CD8-positive, alpha-beta T cell (primary cell): ENCODE measurements at regions of chr5 and their contacts with region 1.

Region 1: GRCh38 chr5:142881076-142881783 is 111.1 kb downstream of the ARHGAP26 start:
- DNase-seq: peak in 1 of 9 experiments; percentile 39
- ATAC-seq: no peak
- H3K4me3 ChIP-seq: no peak overlapping the region
- H3K4me3 Mint-ChIP-seq: no peak overlapping the region
- H3K27ac ChIP-seq: no peak overlapping the region
- H3K27ac Mint-ChIP-seq: no peak overlapping the region
- H3K4me1 ChIP-seq: no peaks in the 10 kb centered on the region
- H3K4me1 Mint-ChIP-seq: peaks cover 6% of the 10 kb centered on the region
- H3K27me3 ChIP-seq: no peaks in the 10 kb centered on the region
- H3K27me3 Mint-ChIP-seq: no peaks in the 10 kb centered on the region
- CTCF ChIP-seq: no peak

Region 2: GRCh38 chr5:142446131-142446959 is 434.9 kb before region 1 on chr5:
- CTCF ChIA-PET with region 1: no interaction called
- POLR2A ChIA-PET with region 1: no interaction called
- intact Hi-C with region 1: no loop called
- DNase-seq: no peak
- ATAC-seq: no peak
- H3K4me3 ChIP-seq: no peak overlapping the region
- H3K4me3 Mint-ChIP-seq: no peak overlapping the region
- H3K27ac ChIP-seq: no peak overlapping the region
- H3K27ac Mint-ChIP-seq: no peak overlapping the region
- H3K4me1 ChIP-seq: peaks cover 9% of the 10 kb centered on the region
- H3K4me1 Mint-ChIP-seq: peaks cover 9% of the 10 kb centered on the region
- H3K27me3 ChIP-seq: no peaks in the 10 kb centered on the region
- H3K27me3 Mint-ChIP-seq: peaks cover 12% of the 10 kb centered on the region
- CTCF ChIP-seq: no peak

Region 3: DNA sequence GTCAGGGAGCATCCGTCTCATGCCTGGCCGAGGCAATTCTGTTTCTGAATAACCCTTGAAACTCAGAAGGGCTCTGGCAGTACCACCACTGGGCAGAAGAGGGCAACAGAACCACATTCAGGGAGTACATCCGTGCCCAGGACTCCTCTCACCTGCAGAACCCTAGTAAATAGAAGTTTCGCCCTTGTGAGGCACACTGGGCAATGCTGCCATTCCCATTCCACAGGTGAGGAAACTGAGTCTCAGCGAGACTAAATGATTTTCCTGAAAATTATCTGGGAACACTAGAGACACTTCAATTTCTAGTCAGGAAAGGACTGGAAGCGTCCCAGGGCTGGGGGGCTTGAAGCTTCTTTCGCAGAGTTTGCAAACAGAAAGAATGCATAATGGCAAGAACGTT is 270.1 kb before region 1 on chr5:
- CTCF ChIA-PET with region 1: interaction called, 3 read pairs
- POLR2A ChIA-PET with region 1: no interaction called
- intact Hi-C with region 1: loop called (anchors 2 to 5 kb)
- DNase-seq: peak; percentile 30 to 73 (median 60)
- ATAC-seq: peak; percentile 89
- H3K4me3 ChIP-seq: no peak overlapping the region
- H3K4me3 Mint-ChIP-seq: no peak overlapping the region
- H3K27ac ChIP-seq: no peak overlapping the region
- H3K27ac Mint-ChIP-seq: no peak overlapping the region
- H3K4me1 ChIP-seq: no peaks in the 10 kb centered on the region
- H3K4me1 Mint-ChIP-seq: peaks cover 3% of the 10 kb centered on the region
- H3K27me3 ChIP-seq: no peaks in the 10 kb centered on the region
- H3K27me3 Mint-ChIP-seq: peaks cover 9% of the 10 kb centered on the region
- CTCF ChIP-seq: peak; percentile 81

Region 4: DNA sequence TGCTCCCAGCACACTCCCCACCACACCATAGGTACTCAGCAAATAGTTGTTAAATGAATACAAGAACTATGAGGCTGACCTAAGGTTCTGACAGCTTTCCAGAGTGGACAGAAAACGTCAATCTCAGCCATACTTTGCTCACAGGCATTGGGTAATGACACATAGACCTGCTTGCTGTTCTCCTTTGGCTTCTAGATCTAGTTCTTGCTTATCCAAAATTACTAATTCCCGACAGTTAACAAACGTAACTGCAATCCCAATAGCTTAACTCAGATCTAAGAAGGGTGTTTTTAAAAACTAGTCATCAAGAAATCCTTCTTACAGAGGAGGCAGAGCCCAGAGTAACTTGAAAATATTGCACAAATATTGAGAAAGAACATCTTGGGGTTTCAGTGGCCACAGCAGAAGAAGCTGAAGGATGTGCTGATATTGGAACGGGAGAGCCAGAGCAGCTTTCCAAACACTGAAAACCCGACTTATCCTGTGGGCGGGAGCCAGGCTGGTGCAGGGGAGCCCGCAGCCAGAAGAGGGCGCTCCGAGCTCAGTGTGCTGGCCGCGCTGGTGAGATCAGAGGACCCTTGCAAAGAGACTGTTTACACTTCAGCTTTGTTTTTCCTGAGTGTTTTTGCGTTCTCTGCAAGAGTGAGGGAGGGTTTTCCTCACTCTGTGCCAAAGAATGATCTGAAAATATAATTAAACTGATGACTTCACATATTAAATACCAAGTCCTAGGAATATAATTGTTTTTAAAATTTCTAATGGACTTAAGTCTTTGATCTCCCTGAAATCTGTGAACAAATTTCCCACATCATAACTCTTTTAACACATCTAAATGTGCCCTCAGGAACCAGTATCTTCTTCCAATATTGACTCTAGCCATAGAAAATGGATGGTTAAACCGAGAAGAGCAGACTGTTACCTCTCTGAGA is 225.6 kb before region 1 on chr5:
- CTCF ChIA-PET with region 1: interaction called, 41 read pairs
- POLR2A ChIA-PET with region 1: no interaction called
- intact Hi-C with region 1: loop called (anchors 1 to 2 kb)
- DNase-seq: peak; percentile 36 to 79 (median 69)
- ATAC-seq: peak; percentile 89
- H3K4me3 ChIP-seq: no peak overlapping the region
- H3K4me3 Mint-ChIP-seq: no peak overlapping the region
- H3K27ac ChIP-seq: no peak overlapping the region
- H3K27ac Mint-ChIP-seq: no peak overlapping the region
- H3K4me1 ChIP-seq: no peaks in the 10 kb centered on the region
- H3K4me1 Mint-ChIP-seq: peaks cover 3% of the 10 kb centered on the region
- H3K27me3 ChIP-seq: no peaks in the 10 kb centered on the region
- H3K27me3 Mint-ChIP-seq: peaks cover 16% of the 10 kb centered on the region
- CTCF ChIP-seq: peak; percentile 97

Region 5: DNA sequence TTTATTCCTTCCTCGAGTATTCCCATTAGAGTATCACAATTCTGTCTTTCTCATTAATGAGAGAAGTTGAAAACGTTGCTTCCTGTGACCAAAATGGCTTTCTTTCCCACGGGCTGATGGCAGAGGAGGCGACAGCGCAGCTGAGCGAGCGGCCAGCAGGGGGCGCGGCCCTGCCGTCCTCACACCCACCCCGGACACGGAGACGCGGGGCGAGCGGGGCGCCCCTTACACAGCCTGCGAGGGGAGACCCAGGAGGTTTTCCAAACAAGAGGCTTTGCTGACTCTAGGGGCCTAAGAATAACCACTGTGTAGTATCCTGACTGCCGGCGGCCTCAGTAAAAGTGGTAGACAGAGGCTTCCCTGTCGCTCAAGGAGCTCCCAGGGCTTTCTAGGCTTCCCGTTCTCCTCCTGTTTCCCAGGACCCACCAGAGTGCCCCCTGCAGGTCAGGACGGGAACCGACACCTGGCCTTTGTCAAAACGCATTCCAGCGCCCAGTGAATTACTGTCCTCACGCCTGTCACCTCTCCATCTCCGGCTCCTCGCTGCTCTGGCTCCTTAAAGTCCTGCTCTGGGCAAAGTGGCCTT is 168.0 kb before region 1 on chr5:
- CTCF ChIA-PET with region 1: interaction called, 258 read pairs
- POLR2A ChIA-PET with region 1: interaction called, 3 read pairs
- intact Hi-C with region 1: loop called (anchors 1 to 2 kb)
- DNase-seq: peak; percentile 70 to 93 (median 83)
- ATAC-seq: peak; percentile 95
- H3K4me3 ChIP-seq: peak overlapping the region; percentile 61 to 82
- H3K4me3 Mint-ChIP-seq: peak overlapping the region; percentile 76
- H3K27ac ChIP-seq: peak overlapping the region in 1 of 2 experiments; percentile 49
- H3K27ac Mint-ChIP-seq: peak overlapping the region; percentile 45
- H3K4me1 ChIP-seq: peaks cover 4% of the 10 kb centered on the region
- H3K4me1 Mint-ChIP-seq: peaks cover 18% of the 10 kb centered on the region
- H3K27me3 ChIP-seq: no peaks in the 10 kb centered on the region
- H3K27me3 Mint-ChIP-seq: no peaks in the 10 kb centered on the region
- CTCF ChIP-seq: peak; percentile 98

Region 6: DNA sequence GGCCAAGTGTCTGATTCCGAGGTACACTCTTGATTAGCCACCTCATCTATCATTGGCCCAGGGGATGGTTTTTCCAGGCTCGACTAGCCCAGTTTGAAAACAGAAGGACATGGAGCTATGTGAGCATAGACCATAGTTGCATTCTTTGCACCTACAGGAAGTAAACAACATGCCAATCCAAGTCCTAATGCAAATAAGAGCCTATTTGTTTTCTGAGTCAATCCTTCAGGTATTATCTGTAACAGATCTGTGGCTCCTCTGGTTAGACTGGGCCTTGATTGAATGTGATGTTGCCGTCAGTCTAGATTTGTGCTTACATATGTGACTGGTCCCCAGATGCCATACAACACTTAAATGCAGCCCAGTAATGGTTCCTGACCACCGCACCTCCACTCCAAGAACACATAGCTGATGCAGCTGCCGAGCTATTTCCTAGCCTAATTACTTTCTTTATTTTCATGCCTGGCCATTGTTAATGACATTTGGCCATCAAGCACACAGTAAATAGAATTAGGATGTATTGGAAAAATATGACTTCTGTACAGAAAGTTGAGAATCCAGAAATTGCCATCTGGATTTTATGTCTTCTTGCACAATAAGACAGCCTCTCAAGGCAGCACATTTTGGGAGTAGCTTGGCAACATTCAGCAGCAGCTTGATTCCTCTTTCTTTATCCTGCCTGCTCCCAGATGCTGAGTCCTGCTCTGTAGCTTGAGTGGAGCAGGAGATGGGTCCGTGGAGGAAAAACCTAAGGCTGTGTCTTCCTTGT is 140.6 kb before region 1 on chr5:
- CTCF ChIA-PET with region 1: interaction called, 269 read pairs
- POLR2A ChIA-PET with region 1: no interaction called
- intact Hi-C with region 1: no loop called
- DNase-seq: no peak
- ATAC-seq: no peak
- H3K4me3 ChIP-seq: no peak overlapping the region
- H3K4me3 Mint-ChIP-seq: no peak overlapping the region
- H3K27ac ChIP-seq: no peak overlapping the region
- H3K27ac Mint-ChIP-seq: no peak overlapping the region
- H3K4me1 ChIP-seq: no peaks in the 10 kb centered on the region
- H3K4me1 Mint-ChIP-seq: peaks cover 7% of the 10 kb centered on the region
- H3K27me3 ChIP-seq: no peaks in the 10 kb centered on the region
- H3K27me3 Mint-ChIP-seq: peaks cover 6% of the 10 kb centered on the region
- CTCF ChIP-seq: no peak

Region 7: GRCh38 chr5:142860270-142860669 is 21.0 kb before region 1 on chr5:
- CTCF ChIA-PET with region 1: interaction called, 23 read pairs
- POLR2A ChIA-PET with region 1: no interaction called
- intact Hi-C with region 1: no loop called
- DNase-seq: no peak
- ATAC-seq: no peak
- H3K4me3 ChIP-seq: no peak overlapping the region
- H3K4me3 Mint-ChIP-seq: no peak overlapping the region
- H3K27ac ChIP-seq: no peak overlapping the region
- H3K27ac Mint-ChIP-seq: no peak overlapping the region
- H3K4me1 ChIP-seq: peaks cover 12% of the 10 kb centered on the region
- H3K4me1 Mint-ChIP-seq: peaks cover 79% of the 10 kb centered on the region
- H3K27me3 ChIP-seq: no peaks in the 10 kb centered on the region
- H3K27me3 Mint-ChIP-seq: no peaks in the 10 kb centered on the region
- CTCF ChIP-seq: no peak